ENCODE measurements at regions of chr18 and their contacts with region 1.

Region 1: GRCh38 chr18:8982416-8983184 is 119.9 kb upstream of the NDUFV2 start:
- DNase-seq: peak; percentile 44 to 83
- ATAC-seq: peak; percentile 89 to 96
- H3K4me3 ChIP-seq: no peak overlapping the region
- H3K27ac ChIP-seq: peak overlapping the region; percentile 56 to 89
- H3K4me1 ChIP-seq: peaks cover 39% of the 10 kb centered on the region
- CTCF ChIP-seq: peak; percentile 73
- EP300 ChIP-seq: no peak
- POLR2A ChIP-seq: no peak
- RAD21 ChIP-seq: peak; percentile 88 to 93

Region 2: GRCh38 chr18:8685141-8685913 is 297.3 kb before region 1 on chr18:
- CTCF ChIA-PET with region 1: interaction called, 14 read pairs
- POLR2A ChIA-PET with region 1: no interaction called
- DNase-seq: no peak
- ATAC-seq: no peak
- H3K4me3 ChIP-seq: no peak overlapping the region
- H3K27ac ChIP-seq: 0 out of 6 replicates have a peak overlapping the region, but pooled peaks of 1 of the 2 experiments have one; percentile 11
- H3K4me1 ChIP-seq: no peaks in the 10 kb centered on the region
- CTCF ChIP-seq: no peak
- EP300 ChIP-seq: no peak
- POLR2A ChIP-seq: no peak
- RAD21 ChIP-seq: no peak

Region 3: GRCh38 chr18:8800449-8800848 is 182.2 kb before region 1 on chr18:
- CTCF ChIA-PET with region 1: interaction called, 35 read pairs
- POLR2A ChIA-PET with region 1: no interaction called
- DNase-seq: peak; percentile 60 to 93
- ATAC-seq: peak; percentile 89
- H3K4me3 ChIP-seq: no peak overlapping the region
- H3K27ac ChIP-seq: peak overlapping the region; percentile 96 to 99
- H3K4me1 ChIP-seq: peaks cover 97% of the 10 kb centered on the region
- CTCF ChIP-seq: no peak
- EP300 ChIP-seq: peak; percentile 59 to 80; a peak in 3 of 5 replicates
- POLR2A ChIP-seq: no peak
- RAD21 ChIP-seq: peak in 1 of 2 experiments; percentile 35; a peak in 2 of 5 replicates

Region 4: DNA sequence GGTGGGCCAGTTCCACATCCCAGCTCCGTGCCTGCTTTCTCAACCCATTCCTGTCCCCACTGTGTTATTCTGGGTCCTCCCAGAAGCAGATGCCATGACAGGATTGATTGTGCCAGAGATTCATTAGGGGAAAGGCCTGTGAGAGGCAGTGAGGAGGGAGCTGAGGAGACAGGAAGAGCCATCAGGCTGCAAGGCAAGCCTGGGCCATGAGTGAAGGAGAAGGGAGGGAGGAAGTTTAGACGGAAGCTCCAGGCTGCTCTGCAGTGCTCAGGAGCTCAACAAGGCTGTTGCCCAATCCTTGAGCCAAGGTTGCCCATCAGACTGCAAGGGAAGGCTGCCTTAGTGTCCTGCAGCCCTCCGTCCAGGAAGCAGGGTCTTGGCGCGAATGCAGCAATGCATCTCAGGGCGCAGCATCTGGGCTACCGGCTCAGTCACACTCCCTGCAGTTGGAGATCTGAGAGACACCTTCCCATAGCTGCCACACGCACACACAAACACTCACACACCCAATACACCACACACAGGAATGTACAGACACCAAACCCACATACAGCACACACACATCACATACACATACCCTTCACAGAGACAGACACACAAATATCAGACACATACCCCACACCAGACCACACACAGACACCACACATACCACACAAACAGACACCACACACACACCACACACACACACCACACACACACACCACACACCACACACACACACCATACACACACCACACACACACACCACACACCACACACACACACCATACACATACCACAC is 19.6 kb before region 1 on chr18:
- CTCF ChIA-PET with region 1: interaction called, 15 read pairs
- POLR2A ChIA-PET with region 1: no interaction called
- DNase-seq: peak in 1 of 2 experiments; percentile 18
- ATAC-seq: peak; percentile 41 to 49; a peak in 5 of 6 replicates
- H3K4me3 ChIP-seq: no peak overlapping the region
- H3K27ac ChIP-seq: peak overlapping the region; percentile 86 to 94; a peak in 5 of 6 replicates
- H3K4me1 ChIP-seq: peaks cover 31% of the 10 kb centered on the region
- CTCF ChIP-seq: no peak
- EP300 ChIP-seq: no peak
- POLR2A ChIP-seq: no peak
- RAD21 ChIP-seq: no peak

Region 5: DNA sequence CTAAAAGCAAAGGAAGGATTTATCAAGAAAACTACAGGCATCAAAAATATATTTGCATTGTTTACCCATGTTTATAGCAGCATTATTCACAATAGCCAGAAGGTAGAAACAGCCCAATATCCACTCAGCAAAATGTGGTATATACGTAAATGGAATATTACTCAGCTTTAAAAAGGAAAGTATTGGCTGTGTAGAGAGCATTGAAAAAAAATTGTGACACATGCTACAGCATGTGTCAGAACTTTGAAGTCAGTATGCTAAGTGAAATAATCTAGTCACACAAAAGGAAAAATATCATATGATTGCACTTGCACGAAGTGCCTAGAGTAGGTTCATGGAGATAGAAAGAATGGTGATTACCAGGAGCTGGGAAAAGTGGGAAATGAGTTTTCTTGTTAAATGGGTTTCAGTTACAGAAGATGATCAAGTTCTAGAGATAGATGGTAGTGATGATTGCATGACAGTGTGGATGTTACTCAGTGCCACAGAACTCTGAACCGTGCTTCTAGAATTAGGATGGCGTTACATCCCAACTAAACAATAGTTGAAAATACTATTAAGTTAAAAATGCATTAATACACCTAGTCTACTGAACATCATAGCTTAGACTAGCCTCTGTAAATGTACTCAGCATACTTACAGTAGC is 174.1 kb after region 1 on chr18:
- CTCF ChIA-PET with region 1: no interaction called
- POLR2A ChIA-PET with region 1: no interaction called
- DNase-seq: no peak
- ATAC-seq: no peak
- H3K4me3 ChIP-seq: no peak overlapping the region
- H3K27ac ChIP-seq: no peak overlapping the region
- H3K4me1 ChIP-seq: peaks cover 20% of the 10 kb centered on the region; the same call in 2 of the 3 replicates
- CTCF ChIP-seq: no peak
- EP300 ChIP-seq: no peak
- POLR2A ChIP-seq: no peak
- RAD21 ChIP-seq: no peak

Region 6: DNA sequence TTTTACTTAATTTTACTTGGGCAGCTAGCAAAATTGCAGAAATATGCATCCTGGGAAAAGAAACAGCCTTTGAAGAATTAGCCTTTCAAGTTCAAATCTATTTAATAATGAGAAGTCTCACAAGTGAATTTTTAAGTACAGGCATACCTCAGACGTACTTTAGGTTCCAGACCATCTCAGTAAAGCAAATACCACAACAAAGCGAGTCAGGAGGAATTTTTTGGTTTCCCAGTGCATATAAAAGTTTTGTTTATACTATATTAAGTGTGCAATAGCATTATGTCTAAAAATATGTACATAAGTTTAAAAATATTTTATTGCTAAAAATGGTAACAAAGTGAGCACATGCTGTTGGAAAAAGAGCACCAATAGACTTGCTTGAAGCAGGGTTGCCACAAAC is 301.2 kb after region 1 on chr18:
- CTCF ChIA-PET with region 1: no interaction called
- POLR2A ChIA-PET with region 1: no interaction called
- DNase-seq: no peak
- ATAC-seq: no peak
- H3K4me3 ChIP-seq: no peak overlapping the region
- H3K27ac ChIP-seq: no peak overlapping the region
- H3K4me1 ChIP-seq: no peaks in the 10 kb centered on the region
- CTCF ChIP-seq: no peak
- EP300 ChIP-seq: no peak
- POLR2A ChIP-seq: no peak
- RAD21 ChIP-seq: no peak